ENCODE measurements at regions of chr9 and their contacts with region 1.

Region 1: DNA sequence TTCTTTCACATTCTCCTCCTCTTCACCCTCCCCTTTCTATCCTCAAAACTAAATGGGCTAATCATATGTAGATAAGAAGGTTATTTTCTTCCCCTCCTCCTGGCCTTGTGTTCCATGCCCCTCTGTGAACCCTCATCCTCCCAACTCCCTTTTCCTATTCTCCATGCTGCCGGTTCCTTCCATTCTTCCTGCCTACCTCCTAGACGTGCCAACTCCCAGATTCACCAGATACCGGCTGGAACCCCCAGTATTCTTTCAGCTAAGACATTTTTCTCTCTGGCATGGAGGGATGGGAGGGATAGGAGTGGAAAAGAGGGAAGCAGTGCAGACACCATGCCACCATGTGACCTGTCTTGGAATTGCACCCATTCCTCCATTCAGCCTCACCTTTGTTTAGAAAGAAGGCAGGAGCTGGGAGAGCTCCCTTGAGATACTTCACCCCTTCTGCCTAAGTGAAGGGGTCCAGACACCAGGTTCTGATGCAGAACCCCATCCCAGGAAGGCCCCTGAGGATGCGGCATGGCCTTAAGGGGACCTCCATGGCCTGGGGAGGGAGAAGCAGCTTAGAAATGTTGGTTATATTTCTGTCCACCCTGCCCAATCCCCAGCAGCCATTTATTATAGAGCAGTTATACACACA is 4.8 kb downstream of the DNAJB5 start:
- DNase-seq: peak in 1 of 2 donors; percentile 67
- ATAC-seq: peak; percentile 8 to 10
- H3K4me3 ChIP-seq: peak overlapping the region; percentile 58 to 73 (median 67)
- H3K27ac ChIP-seq: peak overlapping the region in 1 of 4 donors; percentile 93
- H3K4me1 ChIP-seq: peaks cover 45 to 55% of the 10 kb centered on the region in 2 donors
- H3K27me3 ChIP-seq: no peaks in the 10 kb centered on the region
- CTCF ChIP-seq: peak; percentile 39 to 74 (median 53)
- POLR2A ChIP-seq: no peak

Region 2: GRCh38 chr9:33167046-33167808 is 1827.2 kb before region 1 on chr9 and contains the start of gene B4GALT1:
- in situ Hi-C with region 1: no loop called
- intact Hi-C with region 1: loop called (anchors 2 kb)
- DNase-seq: peak; percentile 83 to 93
- ATAC-seq: peak; percentile 37 to 56
- H3K4me3 ChIP-seq: peak within 1 kb of the TSS; percentile 77 to 97 (median 90)
- H3K27ac ChIP-seq: peak within 1 kb of the TSS; percentile 96 to 99 (median 99)
- H3K4me1 ChIP-seq: peaks cover 44 to 46% of the 10 kb centered on the region in 2 donors
- H3K27me3 ChIP-seq: no peaks in the 10 kb centered on the region
- CTCF ChIP-seq: peak in 1 of 5 experiments; percentile 16
- POLR2A ChIP-seq: peak; percentile 93 to 94
- total RNA-seq, gene B4GALT1: 24.2 to 56.2 (median 42.7) TPM

Region 3: DNA sequence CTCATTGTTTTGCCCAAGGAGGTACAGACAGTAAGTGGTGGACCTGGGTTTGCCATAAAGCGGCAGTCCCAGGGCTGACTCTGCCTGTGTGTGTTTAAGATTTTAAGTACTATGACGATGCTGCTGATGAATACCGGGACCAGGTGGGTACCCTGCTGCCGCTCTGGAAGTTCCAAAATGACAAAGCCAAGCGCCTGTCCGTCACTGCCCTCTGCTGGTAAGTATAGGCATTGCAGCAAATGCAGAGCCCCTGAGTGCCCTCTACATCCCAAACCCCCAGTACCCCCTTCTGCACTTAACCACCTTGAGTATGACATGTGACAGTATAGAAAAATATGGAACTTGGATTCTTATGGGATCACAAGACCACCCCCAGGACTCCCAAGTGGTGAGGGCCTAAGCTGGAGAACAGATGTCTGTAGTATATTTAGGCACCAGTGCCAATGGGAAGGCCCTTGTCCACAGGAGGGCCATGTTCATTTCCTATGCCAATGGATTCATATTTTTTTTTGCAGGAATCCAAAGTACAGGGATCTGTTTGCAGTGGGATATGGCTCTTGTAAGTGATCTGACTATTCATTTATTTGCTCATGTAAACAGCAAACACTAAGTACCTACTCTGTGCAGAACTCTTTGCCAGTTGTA is 493.6 kb before region 1 on chr9:
- in situ Hi-C with region 1: no loop called
- intact Hi-C with region 1: no loop called
- DNase-seq: peak; percentile 27 to 53
- ATAC-seq: peak; percentile 61 to 82
- H3K4me3 ChIP-seq: no peak overlapping the region
- H3K27ac ChIP-seq: no peak overlapping the region
- H3K4me1 ChIP-seq: no peaks in the 10 kb centered on the region
- H3K27me3 ChIP-seq: no peaks in the 10 kb centered on the region
- CTCF ChIP-seq: peak; percentile 90 to 98 (median 97)
- POLR2A ChIP-seq: no peak

Region 4: GRCh38 chr9:34559624-34560452 is 434.5 kb before region 1 on chr9:
- in situ Hi-C with region 1: no loop called
- intact Hi-C with region 1: loop called (anchors 2 kb)
- DNase-seq: peak; percentile 59 to 92
- ATAC-seq: peak; percentile 62 to 66
- H3K4me3 ChIP-seq: peak overlapping the region in 3 of 4 donors; percentile 14 to 33 (median 31)
- H3K27ac ChIP-seq: peak overlapping the region; percentile 92 to 97 (median 93)
- H3K4me1 ChIP-seq: peaks cover 48 to 67% of the 10 kb centered on the region in 2 donors
- H3K27me3 ChIP-seq: no peaks in the 10 kb centered on the region
- CTCF ChIP-seq: no peak
- POLR2A ChIP-seq: no peak

Region 5: GRCh38 chr9:34907044-34907443 is 87.3 kb before region 1 on chr9:
- in situ Hi-C with region 1: no loop called
- intact Hi-C with region 1: no loop called
- DNase-seq: no peak
- ATAC-seq: no peak
- H3K4me3 ChIP-seq: no peak overlapping the region
- H3K27ac ChIP-seq: no peak overlapping the region
- H3K4me1 ChIP-seq: no peaks in the 10 kb centered on the region
- H3K27me3 ChIP-seq: no peaks in the 10 kb centered on the region
- CTCF ChIP-seq: no peak
- POLR2A ChIP-seq: no peak

Region 6: DNA sequence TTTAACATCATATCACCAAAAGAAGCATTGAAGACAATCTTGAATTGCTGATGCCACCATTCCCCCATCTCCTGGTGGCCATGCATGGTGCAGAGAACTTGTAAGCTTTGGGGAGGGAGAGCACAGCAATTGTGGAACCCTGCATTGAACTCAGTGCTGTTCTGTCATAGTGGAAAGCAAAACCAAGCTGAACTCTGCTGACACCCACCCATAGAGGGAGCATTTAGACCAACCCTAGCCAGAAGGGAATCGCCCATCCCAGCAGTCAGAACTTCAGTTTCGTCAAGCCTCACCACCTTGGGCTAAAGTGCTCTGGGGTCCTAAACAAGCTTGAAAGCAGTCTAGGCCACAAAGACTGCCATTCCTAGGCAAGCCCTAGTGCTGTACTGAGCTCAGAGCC is 458.1 kb after region 1 on chr9:
- in situ Hi-C with region 1: no loop called
- intact Hi-C with region 1: no loop called
- DNase-seq: no peak
- ATAC-seq: no peak
- H3K4me3 ChIP-seq: no peak overlapping the region
- H3K27ac ChIP-seq: no peak overlapping the region
- H3K4me1 ChIP-seq: no peaks in the 10 kb centered on the region
- H3K27me3 ChIP-seq: no peaks in the 10 kb centered on the region
- CTCF ChIP-seq: no peak
- POLR2A ChIP-seq: no peak

Region 7: GRCh38 chr9:35489313-35490154 is 495.2 kb after region 1 on chr9 and contains the start of gene RUSC2:
- in situ Hi-C with region 1: no loop called
- intact Hi-C with region 1: loop called (anchors 1 kb)
- DNase-seq: peak; percentile 72 to 88
- ATAC-seq: peak; percentile 56 to 71
- H3K4me3 ChIP-seq: peak within 1 kb of the TSS; percentile 79 to 89 (median 88)
- H3K27ac ChIP-seq: peak within 1 kb of the TSS; percentile 91 to 97 (median 96)
- H3K4me1 ChIP-seq: peaks cover 31% of the 10 kb centered on the region in 2 donors
- H3K27me3 ChIP-seq: no peaks in the 10 kb centered on the region
- CTCF ChIP-seq: peak; percentile 52 to 83 (median 61)
- POLR2A ChIP-seq: peak; percentile 86 to 88
- total RNA-seq, gene RUSC2: 20.8 to 166 (median 45.7) TPM

Region 8: DNA sequence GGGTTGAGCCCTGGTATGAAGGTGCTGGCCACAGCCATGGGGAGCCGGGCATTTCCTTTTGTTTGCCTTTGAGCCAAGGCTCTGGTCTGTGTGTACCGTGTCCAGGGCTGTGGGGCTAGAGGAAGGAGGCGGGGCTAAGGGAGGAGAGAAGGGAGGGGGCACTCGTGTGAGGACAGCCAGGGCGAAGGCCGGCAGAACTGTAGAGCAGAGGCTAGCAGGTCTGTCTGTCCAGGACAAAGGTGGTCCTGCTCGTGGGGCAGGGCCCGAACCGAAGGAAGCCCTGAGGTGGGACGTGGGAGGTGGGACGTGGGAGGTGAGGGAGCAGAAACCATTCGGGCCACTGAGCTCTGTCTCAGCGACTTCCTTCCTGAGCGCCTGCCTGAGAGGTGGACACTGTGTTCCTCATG is 569.4 kb after region 1 on chr9:
- in situ Hi-C with region 1: no loop called
- intact Hi-C with region 1: loop called (anchors 5 kb)
- DNase-seq: peak; percentile 55 to 81
- ATAC-seq: peak; percentile 31 to 34
- H3K4me3 ChIP-seq: peak overlapping the region; percentile 46 to 59 (median 51)
- H3K27ac ChIP-seq: peak overlapping the region; percentile 83 to 95 (median 90)
- H3K4me1 ChIP-seq: peaks cover 82 to 95% of the 10 kb centered on the region in 2 donors
- H3K27me3 ChIP-seq: no peaks in the 10 kb centered on the region
- CTCF ChIP-seq: no peak
- POLR2A ChIP-seq: peak; percentile 48 to 73

Region 9: GRCh38 chr9:35690431-35691333 is 696.3 kb after region 1 on chr9:
- in situ Hi-C with region 1: no loop called
- intact Hi-C with region 1: loop called (anchors 5 kb)
- DNase-seq: peak; percentile 56 to 75
- ATAC-seq: peak; percentile 21 to 32
- H3K4me3 ChIP-seq: peak overlapping the region; percentile 77 to 96 (median 87)
- H3K27ac ChIP-seq: peak overlapping the region; percentile 97 to 99 (median 98)
- H3K4me1 ChIP-seq: peaks cover 35 to 37% of the 10 kb centered on the region in 2 donors
- H3K27me3 ChIP-seq: no peaks in the 10 kb centered on the region
- CTCF ChIP-seq: no peak
- POLR2A ChIP-seq: peak; percentile 21 to 25

Measured in gastrocnemius medialis (tissue), 4 donors.